Activated CD4-positive, alpha-beta T cell treated with anti-CD3 and anti-CD28 coated beads for 36 hours (primary cell): ENCODE measurements at regions of chr5 and their contacts with region 1.

Region 1: DNA sequence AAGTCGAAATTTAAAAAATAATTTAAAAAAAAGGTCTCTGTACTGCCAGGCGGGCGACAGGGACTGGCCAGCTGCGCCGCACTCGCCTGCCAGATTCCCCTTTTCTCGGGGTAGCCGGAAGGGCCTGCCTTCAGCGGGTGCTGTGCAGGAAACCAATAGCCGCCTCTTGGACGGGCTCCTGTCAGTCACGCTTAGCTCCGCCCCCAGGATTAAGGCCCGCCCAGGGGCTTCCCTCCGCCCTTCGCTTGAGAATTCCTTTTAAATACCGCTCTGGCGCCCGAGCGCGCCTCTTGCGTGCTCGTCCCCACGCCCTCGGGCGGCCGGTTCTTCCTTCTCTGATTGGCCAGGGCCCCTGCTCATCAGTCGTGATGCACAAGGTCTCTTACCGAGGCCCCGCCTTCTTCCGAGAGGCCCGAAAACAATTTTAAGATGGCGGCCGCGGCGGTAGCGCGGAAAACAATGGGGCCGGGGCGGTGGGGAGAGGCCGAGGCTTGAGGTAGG is at the start of gene MAML1:
- DNase-seq: peak; percentile 99
- ATAC-seq: peak; percentile 95
- H3K4me3 Mint-ChIP-seq: peak within 1 kb of the TSS; percentile 92
- H3K27ac Mint-ChIP-seq: peak within 1 kb of the TSS; percentile 94
- H3K4me1 Mint-ChIP-seq: peaks cover 43% of the 10 kb centered on the region
- H3K27me3 Mint-ChIP-seq: no peaks in the 10 kb centered on the region
- total RNA-seq, gene MAML1: 25.4 to 32.6 TPM

Region 2: GRCh38 chr5:179550511-179551230 is 181.8 kb before region 1 on chr5 and contains the start of gene RUFY1:
- CTCF ChIA-PET with region 1: no interaction called
- POLR2A ChIA-PET with region 1: no interaction called
- intact Hi-C with region 1: loop called in 1 of 2 experiments (anchors 2 kb)
- DNase-seq: peak; percentile 89
- ATAC-seq: peak; percentile 80
- H3K4me3 Mint-ChIP-seq: peak within 1 kb of the TSS; percentile 96
- H3K27ac Mint-ChIP-seq: peak within 1 kb of the TSS; percentile 99
- H3K4me1 Mint-ChIP-seq: peaks cover 37% of the 10 kb centered on the region
- H3K27me3 Mint-ChIP-seq: no peaks in the 10 kb centered on the region
- total RNA-seq, gene RUFY1: 29.6 to 33.8 TPM

Region 3: DNA sequence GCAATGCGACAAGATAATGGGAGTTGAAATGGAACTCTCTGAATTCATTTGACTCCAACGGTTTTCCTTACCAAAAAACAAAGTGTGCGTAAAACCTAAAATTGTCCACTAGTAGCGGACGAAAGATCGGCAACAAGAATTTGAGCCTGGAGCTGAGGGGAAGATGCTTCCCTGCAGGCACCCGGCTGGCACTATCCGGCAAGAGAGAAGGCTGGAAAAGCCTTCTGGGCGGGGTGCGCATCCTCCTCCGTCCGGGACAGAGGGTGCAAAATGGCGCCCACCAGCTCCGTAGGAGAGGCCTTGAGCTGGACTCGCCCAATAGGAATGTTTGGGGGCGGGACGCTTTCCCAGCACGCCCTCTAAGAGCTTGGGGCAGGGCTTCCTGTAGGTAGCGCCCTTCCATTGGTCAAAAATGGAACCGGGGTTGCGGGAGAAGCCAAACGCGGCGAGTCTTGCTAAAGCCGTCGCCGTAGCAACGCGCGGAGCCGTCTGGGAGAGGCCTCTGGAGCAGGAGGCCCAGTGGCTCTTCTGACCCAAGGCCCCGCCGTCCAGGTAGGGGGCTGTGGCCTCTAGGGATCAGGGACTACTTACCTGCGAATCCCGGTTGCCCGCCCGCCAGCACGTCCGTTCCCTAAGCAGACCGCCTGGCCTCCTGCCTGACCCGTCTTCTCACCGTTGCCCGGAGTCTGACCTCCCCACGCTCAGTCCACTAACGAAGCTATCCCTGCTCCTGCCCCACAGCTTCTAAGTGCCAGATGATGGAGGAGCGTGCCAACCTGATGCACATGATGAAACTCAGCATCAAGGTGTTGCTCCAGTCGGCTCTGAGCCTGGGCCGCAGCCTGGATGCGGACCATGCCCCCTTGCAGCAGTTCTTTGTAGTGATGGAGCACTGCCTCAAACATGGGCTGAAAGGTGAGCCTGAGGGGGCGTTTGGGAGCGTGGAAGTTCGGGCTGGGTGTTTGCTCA is 172.9 kb before region 1 on chr5:
- CTCF ChIA-PET with region 1: no interaction called
- POLR2A ChIA-PET with region 1: interaction called, 5 read pairs
- intact Hi-C with region 1: loop called in 1 of 2 experiments (anchors 1 kb)
- DNase-seq: peak; percentile 97
- ATAC-seq: peak; percentile 100
- H3K4me3 Mint-ChIP-seq: peak overlapping the region; percentile 82
- H3K27ac Mint-ChIP-seq: peak overlapping the region; percentile 80
- H3K4me1 Mint-ChIP-seq: peaks cover 17% of the 10 kb centered on the region
- H3K27me3 Mint-ChIP-seq: no peaks in the 10 kb centered on the region

Region 4: DNA sequence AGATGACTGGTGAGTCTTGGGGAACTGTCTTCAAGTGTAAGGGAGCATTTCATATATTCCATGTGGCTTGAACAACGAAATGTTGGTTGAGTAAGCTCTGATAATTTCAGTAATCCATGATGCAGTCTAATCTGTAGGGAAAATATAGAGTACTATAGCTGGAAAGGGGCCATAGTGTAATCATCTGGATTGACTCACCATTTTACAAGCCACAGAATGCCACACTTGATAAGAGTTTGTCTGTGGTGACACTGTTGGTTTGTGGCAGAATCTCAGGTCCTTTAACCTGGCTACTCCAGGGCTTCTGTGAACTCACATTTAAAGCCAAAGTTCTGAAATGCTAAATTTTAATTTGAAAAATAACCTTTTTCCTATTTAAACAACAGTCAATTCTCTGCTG is 16.2 kb before region 1 on chr5:
- CTCF ChIA-PET with region 1: interaction called, 7 read pairs
- POLR2A ChIA-PET with region 1: interaction called, 10 read pairs
- intact Hi-C with region 1: no loop called
- DNase-seq: no peak
- ATAC-seq: no peak
- H3K4me3 Mint-ChIP-seq: no peak overlapping the region
- H3K27ac Mint-ChIP-seq: peak overlapping the region; percentile 55
- H3K4me1 Mint-ChIP-seq: peaks cover 4% of the 10 kb centered on the region
- H3K27me3 Mint-ChIP-seq: no peaks in the 10 kb centered on the region

Region 5: GRCh38 chr5:179795863-179796833 is 63.7 kb after region 1 on chr5:
- CTCF ChIA-PET with region 1: interaction called, 5 read pairs
- POLR2A ChIA-PET with region 1: interaction called, 4 read pairs
- intact Hi-C with region 1: loop called in 1 of 2 experiments (anchors 1 kb)
- DNase-seq: peak; percentile 87
- ATAC-seq: peak; percentile 80
- H3K4me3 Mint-ChIP-seq: peak overlapping the region; percentile 64
- H3K27ac Mint-ChIP-seq: no peak overlapping the region
- H3K4me1 Mint-ChIP-seq: peaks cover 25% of the 10 kb centered on the region
- H3K27me3 Mint-ChIP-seq: no peaks in the 10 kb centered on the region

Region 6: GRCh38 chr5:179821581-179822432 is 89.3 kb after region 1 on chr5:
- CTCF ChIA-PET with region 1: no interaction called
- POLR2A ChIA-PET with region 1: interaction called, 4 read pairs
- intact Hi-C with region 1: loop called in 1 of 2 experiments (anchors 1 kb)
- DNase-seq: peak; percentile 92
- ATAC-seq: peak; percentile 71
- H3K4me3 Mint-ChIP-seq: peak overlapping the region; percentile 92
- H3K27ac Mint-ChIP-seq: peak overlapping the region; percentile 90
- H3K4me1 Mint-ChIP-seq: peaks cover 38% of the 10 kb centered on the region
- H3K27me3 Mint-ChIP-seq: peaks cover 2% of the 10 kb centered on the region

Region 7: GRCh38 chr5:179858586-179859427 is 126.3 kb after region 1 on chr5 and contains the start of gene MRNIP:
- CTCF ChIA-PET with region 1: no interaction called
- POLR2A ChIA-PET with region 1: no interaction called
- intact Hi-C with region 1: loop called in 1 of 2 experiments (anchors 1 kb)
- DNase-seq: peak; percentile 95
- ATAC-seq: peak; percentile 98
- H3K4me3 Mint-ChIP-seq: peak within 1 kb of the TSS; percentile 84
- H3K27ac Mint-ChIP-seq: peak within 1 kb of the TSS; percentile 85
- H3K4me1 Mint-ChIP-seq: peaks cover 6% of the 10 kb centered on the region
- H3K27me3 Mint-ChIP-seq: no peaks in the 10 kb centered on the region
- total RNA-seq, gene MRNIP: 19.4 to 19.7 TPM

Region 8: GRCh38 chr5:179900711-179901110 is 168.2 kb after region 1 on chr5:
- CTCF ChIA-PET with region 1: no interaction called
- POLR2A ChIA-PET with region 1: no interaction called
- intact Hi-C with region 1: no loop called
- DNase-seq: no peak
- ATAC-seq: no peak
- H3K4me3 Mint-ChIP-seq: no peak overlapping the region
- H3K27ac Mint-ChIP-seq: no peak overlapping the region
- H3K4me1 Mint-ChIP-seq: peaks cover 5% of the 10 kb centered on the region
- H3K27me3 Mint-ChIP-seq: no peaks in the 10 kb centered on the region

Region 9: GRCh38 chr5:180271221-180271620 is 538.8 kb after region 1 on chr5:
- CTCF ChIA-PET with region 1: no interaction called
- POLR2A ChIA-PET with region 1: no interaction called
- intact Hi-C with region 1: no loop called
- DNase-seq: no peak
- ATAC-seq: no peak
- H3K4me3 Mint-ChIP-seq: no peak overlapping the region
- H3K27ac Mint-ChIP-seq: no peak overlapping the region
- H3K4me1 Mint-ChIP-seq: no peaks in the 10 kb centered on the region
- H3K27me3 Mint-ChIP-seq: no peaks in the 10 kb centered on the region

Region 10: DNA sequence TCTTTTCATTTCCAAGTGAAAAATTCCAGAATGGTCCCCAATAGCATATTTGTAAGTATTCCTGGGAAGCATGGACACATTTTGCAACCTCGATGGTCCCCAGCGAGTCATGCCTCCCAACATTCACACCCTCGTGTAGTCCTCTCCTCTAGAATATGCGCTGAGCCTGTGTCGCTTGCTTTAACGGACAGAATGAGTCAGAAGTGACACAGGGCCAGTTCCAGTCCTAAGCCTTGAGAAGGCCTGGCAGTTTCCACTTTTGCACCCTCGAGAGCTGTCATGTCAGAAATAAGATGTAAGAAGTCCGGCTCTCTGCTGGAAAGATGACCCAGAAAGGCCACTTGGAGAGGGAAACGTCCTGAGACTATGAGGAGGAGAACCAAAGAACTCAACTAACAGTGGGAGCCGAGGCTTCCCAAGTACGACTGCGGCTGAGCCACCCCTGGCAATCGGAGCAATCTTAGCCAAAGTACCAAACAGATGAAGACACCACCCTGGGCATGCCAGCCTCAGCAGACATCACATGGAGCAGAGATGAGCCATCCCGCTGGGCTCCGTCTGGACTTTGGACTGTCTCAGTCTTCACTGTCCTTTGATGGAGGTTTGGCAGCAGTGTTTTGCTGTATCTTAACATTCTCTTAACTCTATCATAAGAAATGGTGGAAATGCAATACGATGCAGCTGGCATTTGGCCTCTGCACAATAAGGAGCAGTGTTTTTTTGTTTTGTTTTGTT is 663.2 kb after region 1 on chr5:
- CTCF ChIA-PET with region 1: no interaction called
- POLR2A ChIA-PET with region 1: no interaction called
- intact Hi-C with region 1: no loop called
- DNase-seq: no peak
- ATAC-seq: no peak
- H3K4me3 Mint-ChIP-seq: no peak overlapping the region
- H3K27ac Mint-ChIP-seq: no peak overlapping the region
- H3K4me1 Mint-ChIP-seq: no peaks in the 10 kb centered on the region
- H3K27me3 Mint-ChIP-seq: peaks cover 2% of the 10 kb centered on the region